ENCODE measurements at regions of chr19 and their contacts with region 1.

Region 1: GRCh38 chr19:48795055-48795684 is 15.7 kb downstream of the BCAT2 start:
- DNase-seq: peak; percentile 92
- H3K4me3 ChIP-seq: peak overlapping the region; percentile 33
- H3K27ac ChIP-seq: peak overlapping the region; percentile 34
- H3K4me1 ChIP-seq: no peaks in the 10 kb centered on the region
- H3K27me3 ChIP-seq: no peaks in the 10 kb centered on the region
- CTCF ChIP-seq: peak; percentile 96

Region 2: GRCh38 chr19:48835734-48836088 is 40.5 kb after region 1 on chr19:
- intact Hi-C with region 1: loop called (anchors 2 kb)
- DNase-seq: peak; percentile 97
- H3K4me3 ChIP-seq: peak overlapping the region; percentile 17
- H3K27ac ChIP-seq: no peak overlapping the region
- H3K4me1 ChIP-seq: no peaks in the 10 kb centered on the region
- H3K27me3 ChIP-seq: no peaks in the 10 kb centered on the region
- CTCF ChIP-seq: peak; percentile 83

Region 3: DNA sequence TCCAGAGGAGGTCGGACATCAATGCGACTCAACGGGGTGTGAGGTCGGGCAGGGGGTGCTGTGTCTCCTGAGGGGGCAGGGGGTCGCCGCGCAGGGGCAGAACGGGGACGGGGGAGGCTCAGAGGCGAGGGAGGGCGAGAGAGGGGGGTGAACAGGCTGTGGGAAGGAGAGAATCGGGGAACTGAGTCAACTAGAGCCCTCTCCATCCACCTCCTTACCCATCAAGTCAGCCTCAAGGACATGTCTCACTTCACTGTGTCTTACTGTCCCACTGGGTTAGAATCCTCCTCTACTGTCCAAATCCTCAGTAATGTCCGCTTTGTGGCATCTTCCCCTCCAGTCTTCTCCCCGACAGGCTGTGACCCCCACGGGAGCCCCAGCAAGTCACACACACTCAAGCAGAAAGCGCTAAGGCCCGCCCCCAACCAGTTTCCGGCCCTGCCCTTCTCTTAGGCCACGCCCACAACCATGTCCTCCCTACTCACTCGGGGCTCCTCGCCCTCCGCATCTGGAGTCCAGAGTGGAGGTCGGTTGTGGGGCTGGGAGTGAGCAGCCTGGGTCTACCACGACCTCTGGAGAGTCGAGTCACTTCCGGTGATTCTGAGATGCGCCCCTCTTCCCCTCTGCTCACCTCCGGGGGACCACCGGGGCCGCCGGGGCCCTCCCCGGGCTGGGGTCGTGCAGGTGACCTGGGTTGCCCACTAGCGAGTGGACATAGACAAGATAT is 64.0 kb after region 1 on chr19:
- intact Hi-C with region 1: no loop called
- DNase-seq: peak; percentile 73
- H3K4me3 ChIP-seq: no peak overlapping the region
- H3K27ac ChIP-seq: no peak overlapping the region
- H3K4me1 ChIP-seq: no peaks in the 10 kb centered on the region
- H3K27me3 ChIP-seq: no peaks in the 10 kb centered on the region
- CTCF ChIP-seq: no peak

Region 4: GRCh38 chr19:48965040-48965805 is 170.1 kb after region 1 on chr19 and contains the start of gene FTL:
- intact Hi-C with region 1: loop called (anchors 5 kb)
- DNase-seq: peak; percentile 98
- H3K4me3 ChIP-seq: peak within 1 kb of the TSS; percentile 89
- H3K27ac ChIP-seq: peak within 1 kb of the TSS; percentile 76
- H3K4me1 ChIP-seq: no peaks in the 10 kb centered on the region
- H3K27me3 ChIP-seq: no peaks in the 10 kb centered on the region
- CTCF ChIP-seq: no peak
- total RNA-seq, gene FTL: 1,463 to 1,600 TPM

Measured in colonic mucosa (tissue), 4 donors.